PC-3 (cell line): ENCODE measurements at regions of chr2 and their contacts with region 1.

Region 1: DNA sequence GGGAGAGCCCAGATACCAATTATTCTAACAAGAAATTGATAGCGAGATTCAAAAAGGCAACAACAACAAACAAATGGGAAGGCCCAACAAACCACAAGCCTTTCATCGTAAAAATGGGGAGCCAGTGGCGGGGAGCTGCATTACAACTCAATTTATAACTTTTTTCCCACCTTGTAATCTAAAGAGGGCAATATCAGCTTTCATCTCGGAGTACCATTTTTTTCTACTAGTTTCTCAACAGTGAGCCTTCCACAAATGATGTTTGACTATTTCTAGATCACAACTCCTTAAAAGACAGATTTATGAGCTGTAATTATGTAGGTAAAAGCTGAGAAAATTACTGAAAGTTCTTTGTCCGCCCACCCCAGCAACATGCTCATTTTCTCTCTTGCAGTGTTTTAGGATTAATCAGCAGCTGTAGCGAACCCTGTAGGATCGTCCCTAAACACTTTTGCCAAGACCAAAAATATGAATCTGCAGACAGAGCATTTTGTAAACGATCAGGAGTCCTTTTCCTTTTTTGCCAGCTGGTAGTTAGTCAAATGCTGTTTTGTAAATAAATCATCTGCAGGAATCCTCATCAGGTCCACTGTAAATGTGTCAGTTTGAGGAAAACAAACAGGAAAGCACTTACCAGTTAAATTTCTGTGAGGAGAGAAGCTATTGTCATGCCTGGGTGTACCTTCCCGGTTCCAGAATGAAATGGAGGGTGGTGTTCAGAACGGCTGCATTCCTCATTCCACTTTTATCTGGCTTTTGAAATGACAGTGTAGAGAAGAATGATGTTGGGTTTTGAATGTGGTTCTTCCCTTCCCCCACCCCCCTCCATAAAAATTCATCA is 53.2 kb downstream of the EEF1B2 start:
- DNase-seq: peak; percentile 64
- ATAC-seq: peak; percentile 80
- H3K4me3 ChIP-seq: peak overlapping the region; percentile 62
- H3K27ac ChIP-seq: peak overlapping the region; percentile 4
- H3K4me1 ChIP-seq: peaks cover 27% of the 10 kb centered on the region
- H3K27me3 ChIP-seq: peaks cover 3% of the 10 kb centered on the region; the same call in 1 of the 2 replicates
- CTCF ChIP-seq: no peak

Region 2: GRCh38 chr2:205633994-205634393 is 578.9 kb before region 1 on chr2:
- CTCF ChIA-PET with region 1: no interaction called
- POLR2A ChIA-PET with region 1: no interaction called
- intact Hi-C with region 1: no loop called
- DNase-seq: no peak
- ATAC-seq: no peak
- H3K4me3 ChIP-seq: no peak overlapping the region
- H3K27ac ChIP-seq: no peak overlapping the region
- H3K4me1 ChIP-seq: peaks cover 9% of the 10 kb centered on the region; the same call in 1 of the 2 replicates
- H3K27me3 ChIP-seq: peaks cover 4% of the 10 kb centered on the region; the same call in 1 of the 2 replicates
- CTCF ChIP-seq: no peak

Region 3: DNA sequence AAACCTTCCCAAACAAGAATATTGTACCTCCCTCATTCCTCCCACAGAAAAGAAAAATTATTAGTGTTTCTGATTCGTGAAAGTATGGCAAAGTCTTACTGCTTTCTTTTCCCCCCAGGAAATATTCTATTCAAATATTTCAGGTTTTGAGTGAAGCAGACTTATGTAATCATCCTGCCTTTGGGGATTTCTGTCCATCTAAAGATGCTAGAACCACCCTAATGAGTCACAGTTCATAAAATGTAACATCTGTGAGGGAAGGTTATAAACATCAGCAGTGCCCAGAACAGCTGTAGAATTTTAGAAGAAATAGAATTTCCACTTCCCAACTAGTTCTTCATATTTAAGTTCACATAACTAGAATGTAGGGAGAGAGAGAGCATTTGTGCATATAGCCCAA is 14.2 kb before region 1 on chr2:
- CTCF ChIA-PET with region 1: no interaction called
- POLR2A ChIA-PET with region 1: no interaction called
- intact Hi-C with region 1: no loop called
- DNase-seq: peak; percentile 27
- ATAC-seq: peak; percentile 50
- H3K4me3 ChIP-seq: no peak overlapping the region
- H3K27ac ChIP-seq: no peak overlapping the region
- H3K4me1 ChIP-seq: no peaks in the 10 kb centered on the region
- H3K27me3 ChIP-seq: no peaks in the 10 kb centered on the region
- CTCF ChIP-seq: no peak

Region 4: DNA sequence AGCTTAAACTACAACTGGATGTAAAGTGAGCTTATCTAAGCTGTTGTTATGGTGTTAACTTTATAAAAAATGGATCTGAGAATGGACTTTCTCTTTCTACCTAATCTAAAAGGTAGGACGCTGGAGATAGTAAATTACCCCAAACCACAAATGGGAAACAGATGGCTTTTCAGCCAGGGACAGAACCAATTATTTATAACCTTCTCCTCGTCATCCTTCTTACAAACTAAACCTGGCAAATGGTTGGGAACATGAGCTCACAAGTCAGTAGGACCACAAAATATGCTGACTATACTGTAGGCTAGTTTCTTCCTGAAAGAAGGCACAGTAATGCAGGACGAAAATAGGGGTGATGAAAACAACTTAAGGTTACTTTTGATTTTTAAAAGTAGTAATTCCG is 28.8 kb after region 1 on chr2:
- CTCF ChIA-PET with region 1: no interaction called
- POLR2A ChIA-PET with region 1: no interaction called
- intact Hi-C with region 1: no loop called
- DNase-seq: no peak
- ATAC-seq: no peak
- H3K4me3 ChIP-seq: no peak overlapping the region
- H3K27ac ChIP-seq: no peak overlapping the region
- H3K4me1 ChIP-seq: no peaks in the 10 kb centered on the region
- H3K27me3 ChIP-seq: peaks cover 5% of the 10 kb centered on the region; the same call in 1 of the 2 replicates
- CTCF ChIP-seq: no peak

Region 5: GRCh38 chr2:206260188-206261012 is 47.5 kb after region 1 on chr2:
- CTCF ChIA-PET with region 1: interaction called, 3 read pairs
- POLR2A ChIA-PET with region 1: no interaction called
- intact Hi-C with region 1: loop called (anchors 2 kb)
- DNase-seq: peak; percentile 66
- ATAC-seq: peak; percentile 96
- H3K4me3 ChIP-seq: no peak overlapping the region
- H3K27ac ChIP-seq: no peak overlapping the region
- H3K4me1 ChIP-seq: no peaks in the 10 kb centered on the region
- H3K27me3 ChIP-seq: peaks cover 68% of the 10 kb centered on the region
- CTCF ChIP-seq: peak; percentile 67